Left colon (tissue), 2 donors: ENCODE measurements at regions of chr11 and their contacts with region 1.

Region 1: DNA sequence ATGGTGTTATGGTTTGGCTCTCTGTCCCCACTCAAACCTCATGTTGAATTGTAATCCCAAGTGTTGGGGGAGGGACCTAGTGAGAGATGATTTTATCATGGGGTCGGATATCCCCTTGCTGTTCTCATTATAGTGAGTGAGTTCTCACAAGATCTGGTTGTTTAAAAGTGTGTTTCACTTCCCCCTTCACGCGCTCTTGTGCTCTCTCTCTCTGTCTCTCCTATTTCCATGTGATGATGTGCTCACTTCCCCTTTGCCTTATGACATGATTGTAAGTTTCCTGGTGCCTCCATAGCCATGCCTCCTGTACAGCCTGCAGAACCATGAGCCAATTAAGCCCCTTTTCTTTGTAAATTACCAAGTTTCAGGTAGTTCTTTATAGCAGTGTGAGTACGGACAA is 765.1 kb downstream of the KCNA4 start:
- DNase-seq: no peak
- ATAC-seq: no peak

Region 2: GRCh38 chr11:29087200-29087812 is 164.4 kb before region 1 on chr11:
- intact Hi-C with region 1: loop called in 1 of 2 experiments (anchors 10 kb)
- DNase-seq: no peak
- ATAC-seq: no peak

Region 3: DNA sequence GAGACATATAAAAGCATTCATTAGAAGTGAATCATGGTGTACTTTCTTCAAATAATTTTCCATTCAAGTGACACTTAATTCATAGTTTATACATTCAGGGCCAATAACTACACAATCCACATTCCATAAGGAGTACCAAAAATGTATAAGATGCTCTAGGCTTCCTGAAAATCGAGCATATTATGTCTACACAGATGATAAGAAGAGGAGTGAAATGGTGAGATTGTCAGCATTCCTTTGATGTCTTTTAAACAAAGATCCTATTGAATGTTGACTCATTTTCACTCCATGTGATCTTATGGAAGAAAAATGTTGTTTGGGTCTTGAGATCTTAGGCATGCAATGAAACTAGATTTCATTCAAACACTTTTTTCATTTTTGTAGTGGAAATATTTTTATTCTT is 78.1 kb before region 1 on chr11:
- intact Hi-C with region 1: no loop called
- DNase-seq: no peak
- ATAC-seq: no peak